ENCODE measurements at regions of chr15 and their contacts with region 1.

Region 1: DNA sequence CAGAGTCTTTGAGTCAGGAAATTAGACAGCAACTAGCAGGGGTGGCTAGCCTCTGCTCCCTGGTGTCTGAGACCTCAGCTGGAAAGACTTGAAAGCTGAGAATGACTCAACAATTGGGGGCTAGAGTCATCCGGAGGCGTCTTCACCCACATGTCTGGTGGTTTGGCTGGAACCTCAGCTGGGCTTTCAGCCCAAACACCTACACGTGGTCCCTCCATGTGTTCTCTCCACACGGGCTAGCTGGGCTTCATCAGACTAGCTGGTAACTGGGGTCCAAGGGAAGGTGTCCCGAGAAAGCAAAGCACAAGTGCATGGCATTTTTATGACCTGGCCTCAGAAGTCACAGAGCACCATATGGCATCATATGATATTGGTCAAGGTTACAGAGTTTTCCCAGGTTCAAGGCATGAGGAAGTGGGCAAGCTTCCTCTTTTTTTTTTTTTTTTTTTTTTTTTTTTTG is 19.9 kb upstream of the ABHD2 start:
- DNase-seq: no peak
- ATAC-seq: no peak
- H3K4me3 ChIP-seq: no peak overlapping the region
- H3K27ac ChIP-seq: no peak overlapping the region
- H3K4me1 ChIP-seq: no peaks in the 10 kb centered on the region
- H3K27me3 ChIP-seq: no peaks in the 10 kb centered on the region
- CTCF ChIP-seq: no peak

Region 2: GRCh38 chr15:89087830-89088604 is 19.7 kb after region 1 on chr15 and contains the start of gene ABHD2:
- CTCF ChIA-PET with region 1: no interaction called
- POLR2A ChIA-PET with region 1: interaction called, 12 read pairs
- in situ Hi-C with region 1: no loop called
- intact Hi-C with region 1: no loop called
- DNase-seq: peak; percentile 100
- ATAC-seq: peak; percentile 96
- H3K4me3 ChIP-seq: peak within 1 kb of the TSS; percentile 84
- H3K27ac ChIP-seq: peak within 1 kb of the TSS; percentile 97
- H3K4me1 ChIP-seq: peaks cover 40% of the 10 kb centered on the region
- H3K27me3 ChIP-seq: no peaks in the 10 kb centered on the region
- CTCF ChIP-seq: no peak
- total RNA-seq, gene ABHD2: 95.0 TPM

Measured in Panc1 (cell line).